A549 (cell line): ENCODE measurements at regions of chr16 and their contacts with region 1.

Region 1: DNA sequence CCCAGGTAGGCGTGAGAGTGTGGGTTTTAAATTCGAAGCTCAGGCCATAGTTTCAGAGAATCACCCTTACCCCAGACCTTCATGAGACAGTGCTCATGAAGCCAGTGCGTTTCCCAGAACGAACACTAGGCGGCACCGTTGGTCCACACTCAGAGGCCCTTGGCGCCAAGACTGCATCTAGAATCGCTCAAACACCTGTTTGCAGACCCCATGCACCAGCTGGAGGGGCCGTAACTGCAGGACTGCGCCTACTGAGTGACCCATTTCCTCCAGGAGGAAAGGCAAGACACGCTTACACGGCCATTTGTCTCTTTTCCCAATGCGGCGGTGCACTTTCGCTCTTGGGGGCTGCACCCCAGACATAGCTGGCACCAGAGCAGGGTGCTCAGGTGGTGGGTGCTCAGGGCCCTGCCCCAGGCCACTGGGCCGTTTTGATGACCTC is 34.0 kb downstream of the ADGRG5 start:
- DNase-seq: peak; percentile 73 to 78
- ATAC-seq: peak; percentile 89 to 95
- H3K4me3 ChIP-seq: no peak overlapping the region
- H3K27ac ChIP-seq: peak overlapping the region in 1 of 2 experiments; percentile 34; a peak in 1 of 6 replicates
- H3K4me1 ChIP-seq: peaks cover 6% of the 10 kb centered on the region; the same call in 2 of the 3 replicates
- CTCF ChIP-seq: peak; percentile 97
- EP300 ChIP-seq: no peak
- POLR2A ChIP-seq: no peak
- RAD21 ChIP-seq: peak; percentile 95 to 99

Region 2: DNA sequence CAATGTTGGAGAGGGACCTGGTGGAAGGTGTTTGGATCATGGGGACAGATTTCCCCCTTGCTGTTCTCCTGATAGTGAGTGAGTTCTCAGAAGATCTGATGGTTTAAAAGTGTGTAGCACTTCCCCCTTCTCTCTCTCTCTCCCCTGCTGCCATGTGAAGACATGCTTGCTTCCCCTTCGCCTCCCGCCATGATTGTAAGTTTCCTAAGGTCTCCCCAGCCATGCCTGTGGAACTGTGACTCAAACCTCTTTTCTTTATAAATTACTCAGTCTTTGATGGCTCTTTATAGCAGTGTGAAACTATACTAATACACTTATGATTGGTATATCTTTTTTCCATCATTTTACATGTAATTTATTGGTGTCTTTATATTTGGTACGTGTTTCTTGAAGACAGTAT is 20.6 kb before region 1 on chr16:
- CTCF ChIA-PET with region 1: interaction called, 24 read pairs
- POLR2A ChIA-PET with region 1: no interaction called
- DNase-seq: no peak
- ATAC-seq: no peak
- H3K4me3 ChIP-seq: no peak overlapping the region
- H3K27ac ChIP-seq: no peak overlapping the region
- H3K4me1 ChIP-seq: no peaks in the 10 kb centered on the region
- CTCF ChIP-seq: no peak
- EP300 ChIP-seq: no peak
- POLR2A ChIP-seq: no peak
- RAD21 ChIP-seq: no peak

Region 3: GRCh38 chr16:57600048-57600835 is 23.8 kb after region 1 on chr16:
- CTCF ChIA-PET with region 1: interaction called, 127 read pairs
- POLR2A ChIA-PET with region 1: no interaction called
- DNase-seq: peak; percentile 68 to 81
- ATAC-seq: peak; percentile 97 to 99
- H3K4me3 ChIP-seq: no peak overlapping the region
- H3K27ac ChIP-seq: peak overlapping the region; percentile 65 to 79
- H3K4me1 ChIP-seq: peaks cover 21% of the 10 kb centered on the region
- CTCF ChIP-seq: peak; percentile 82
- EP300 ChIP-seq: no peak
- POLR2A ChIP-seq: no peak
- RAD21 ChIP-seq: peak; percentile 89 to 90

Region 4: GRCh38 chr16:57639172-57639887 is 62.9 kb after region 1 on chr16:
- CTCF ChIA-PET with region 1: interaction called, 37 read pairs
- POLR2A ChIA-PET with region 1: no interaction called
- DNase-seq: no peak
- ATAC-seq: no peak
- H3K4me3 ChIP-seq: no peak overlapping the region
- H3K27ac ChIP-seq: peak overlapping the region in 1 of 2 experiments; percentile 52; a peak in 2 of 6 replicates
- H3K4me1 ChIP-seq: peaks cover 51% of the 10 kb centered on the region
- CTCF ChIP-seq: no peak
- EP300 ChIP-seq: no peak
- POLR2A ChIP-seq: no peak
- RAD21 ChIP-seq: no peak

Region 5: DNA sequence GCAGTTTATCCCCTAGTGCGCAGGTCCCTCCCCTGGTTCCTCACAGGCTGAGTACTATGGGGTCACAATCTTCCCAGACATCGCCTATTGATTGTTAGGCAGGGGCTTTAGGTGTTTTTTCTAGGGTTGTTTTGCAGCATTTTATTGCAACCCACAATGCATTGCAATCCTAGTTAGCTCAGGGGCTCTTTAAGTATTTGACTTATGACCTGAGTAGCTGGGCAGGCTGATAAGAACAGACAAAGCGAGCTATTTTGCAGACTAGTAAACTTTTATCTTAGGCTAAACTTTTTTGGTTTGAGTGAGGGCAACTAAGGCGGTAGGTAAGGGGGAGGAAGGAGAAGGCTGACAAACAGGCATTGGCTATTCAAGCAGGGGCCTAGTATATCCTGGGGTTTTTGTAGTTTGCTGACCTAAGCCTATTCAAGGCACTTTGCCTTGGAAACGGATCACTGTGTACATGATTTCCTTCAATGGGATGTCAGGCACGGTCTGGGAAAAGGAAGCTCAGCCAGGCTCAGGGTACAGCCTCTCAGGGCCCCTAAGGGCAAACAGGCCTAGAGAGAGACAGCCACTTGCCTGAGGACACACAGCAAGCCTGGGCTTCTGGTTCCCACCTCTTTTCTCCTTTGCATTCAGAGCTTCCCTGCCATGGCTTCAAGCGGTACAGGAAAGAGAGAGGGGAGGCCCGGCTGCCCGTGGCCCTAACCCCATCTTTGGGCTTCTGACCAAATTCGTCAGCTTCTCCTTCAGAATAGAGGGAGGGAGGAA is 124.5 kb after region 1 on chr16:
- CTCF ChIA-PET with region 1: interaction called, 10 read pairs
- POLR2A ChIA-PET with region 1: no interaction called
- DNase-seq: no peak
- ATAC-seq: no peak
- H3K4me3 ChIP-seq: no peak overlapping the region
- H3K27ac ChIP-seq: no peak overlapping the region
- H3K4me1 ChIP-seq: peaks cover 13% of the 10 kb centered on the region
- CTCF ChIP-seq: no peak
- EP300 ChIP-seq: no peak
- POLR2A ChIP-seq: no peak
- RAD21 ChIP-seq: no peak

Region 6: GRCh38 chr16:57748596-57748995 is 172.1 kb after region 1 on chr16:
- CTCF ChIA-PET with region 1: interaction called, 14 read pairs
- POLR2A ChIA-PET with region 1: no interaction called
- DNase-seq: no peak
- ATAC-seq: no peak
- H3K4me3 ChIP-seq: no peak overlapping the region
- H3K27ac ChIP-seq: no peak overlapping the region
- H3K4me1 ChIP-seq: no peaks in the 10 kb centered on the region
- CTCF ChIP-seq: no peak
- EP300 ChIP-seq: no peak
- POLR2A ChIP-seq: no peak
- RAD21 ChIP-seq: no peak

Region 7: GRCh38 chr16:58000706-58001676 is 424.5 kb after region 1 on chr16 and contains the start of gene USB1:
- CTCF ChIA-PET with region 1: interaction called, 12 read pairs
- POLR2A ChIA-PET with region 1: no interaction called
- DNase-seq: peak; percentile 91 to 97
- ATAC-seq: peak; percentile 84 to 93
- H3K4me3 ChIP-seq: peak within 1 kb of the TSS; percentile 99
- H3K27ac ChIP-seq: peak within 1 kb of the TSS; percentile 98
- H3K4me1 ChIP-seq: peaks cover 41% of the 10 kb centered on the region
- CTCF ChIP-seq: peak; percentile 77
- EP300 ChIP-seq: no peak
- POLR2A ChIP-seq: peak; percentile 90
- RAD21 ChIP-seq: peak; percentile 48 to 89; a peak in 4 of 5 replicates
- polyA plus RNA-seq, gene USB1: 88.2 and 88.8 TPM in 2 replicates